ENCODE measurements at regions of chr14 and their contacts with region 1.

Region 1: DNA sequence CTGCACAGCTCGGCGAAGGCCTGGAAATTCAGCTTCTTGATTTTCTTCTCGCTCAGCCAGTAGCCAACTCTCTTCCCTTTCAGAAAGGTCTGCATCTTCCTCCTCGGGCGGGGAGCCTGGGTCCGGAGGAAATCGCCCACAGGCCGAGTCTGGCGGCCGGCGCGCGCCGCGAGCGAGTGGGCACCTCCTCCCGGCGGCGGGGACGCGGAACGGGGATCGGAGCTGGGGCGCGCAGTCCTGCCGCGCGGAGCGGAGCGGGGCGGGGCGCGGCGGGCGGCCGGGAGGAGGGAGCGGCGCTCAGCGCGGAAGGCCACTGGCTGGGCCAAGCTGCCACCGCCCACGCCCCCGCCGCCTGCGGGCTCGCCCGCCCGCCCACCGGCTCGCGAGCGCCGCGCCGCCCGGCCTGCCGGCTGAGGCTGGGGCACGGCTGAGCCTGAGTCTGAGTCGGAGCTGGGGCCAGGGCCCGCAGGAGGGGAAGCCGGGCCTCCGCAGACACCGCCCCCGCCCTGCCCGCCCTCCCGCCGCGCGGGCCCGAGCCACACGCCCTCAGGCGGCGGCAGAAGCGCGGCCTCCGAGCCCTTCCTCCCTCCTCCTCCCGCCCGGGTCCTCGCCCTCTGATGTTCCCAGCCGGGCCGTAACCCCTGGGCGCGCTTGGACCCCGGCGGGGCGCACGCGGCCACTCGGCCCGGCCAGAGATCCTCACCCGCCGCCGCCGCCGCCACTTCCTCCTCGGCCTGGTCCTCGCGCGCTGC is 480 bp downstream of the ITPK1 start:
- DNase-seq: peak; percentile 70 to 80
- ATAC-seq: peak; percentile 84 to 86
- H3K4me3 ChIP-seq: peak overlapping the region; percentile 76
- H3K27ac ChIP-seq: peak overlapping the region; percentile 96 to 100
- H3K4me1 ChIP-seq: peaks cover 20% of the 10 kb centered on the region
- CTCF ChIP-seq: no peak
- EP300 ChIP-seq: no peak
- POLR2A ChIP-seq: peak; percentile 40; the same call in 1 of the 2 replicates
- RAD21 ChIP-seq: 0 out of 5 replicates have a peak, but pooled peaks of 1 of the 2 experiments have one; percentile 11

Region 2: GRCh38 chr14:92951912-92952471 is 163.3 kb before region 1 on chr14:
- CTCF ChIA-PET with region 1: interaction called, 76 read pairs
- POLR2A ChIA-PET with region 1: interaction called, 4 read pairs
- DNase-seq: peak; percentile 70 to 84
- ATAC-seq: peak; percentile 93 to 97
- H3K4me3 ChIP-seq: no peak overlapping the region
- H3K27ac ChIP-seq: peak overlapping the region; percentile 61 to 64; a peak in 5 of 6 replicates
- H3K4me1 ChIP-seq: peaks cover 10% of the 10 kb centered on the region
- CTCF ChIP-seq: peak; percentile 95
- EP300 ChIP-seq: no peak
- POLR2A ChIP-seq: no peak
- RAD21 ChIP-seq: peak; percentile 98

Region 3: DNA sequence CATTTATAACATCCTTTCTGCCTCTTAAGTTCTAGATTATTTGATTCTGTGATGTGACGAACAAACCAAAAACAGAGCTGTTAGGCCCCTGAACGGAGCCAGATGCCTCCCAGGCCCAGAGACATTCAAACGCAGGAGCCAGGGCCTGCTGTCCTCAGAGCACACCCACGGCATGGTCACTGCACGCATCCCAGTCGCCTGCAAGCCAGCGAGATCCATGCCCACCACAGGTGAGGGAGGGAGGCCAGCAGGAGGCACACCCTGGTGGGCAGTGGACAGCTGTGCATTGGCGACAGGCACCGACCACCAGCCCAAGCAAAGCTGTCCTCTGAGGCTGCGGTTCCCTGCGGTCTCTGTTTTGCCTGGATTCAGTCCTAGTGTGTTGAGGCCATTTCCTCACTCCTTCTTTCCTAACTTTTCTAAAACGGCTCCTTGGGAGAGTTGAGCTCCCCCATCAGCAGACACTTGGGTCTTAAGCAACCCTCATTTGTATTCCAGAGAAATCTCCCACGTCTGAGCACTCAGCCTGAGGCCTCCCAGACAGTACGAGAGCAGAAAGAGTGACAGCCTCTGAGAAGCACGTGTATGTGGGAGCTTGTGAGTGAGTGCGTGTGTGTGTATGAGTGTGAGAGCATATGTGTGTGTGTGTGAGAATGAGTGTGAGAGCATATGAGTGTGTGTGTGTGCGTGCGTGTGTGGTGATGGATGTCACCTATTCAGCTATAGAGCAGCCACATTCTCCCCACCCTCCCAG is 111.1 kb before region 1 on chr14:
- CTCF ChIA-PET with region 1: interaction called, 10 read pairs
- POLR2A ChIA-PET with region 1: no interaction called
- DNase-seq: no peak
- ATAC-seq: no peak
- H3K4me3 ChIP-seq: no peak overlapping the region
- H3K27ac ChIP-seq: no peak overlapping the region
- H3K4me1 ChIP-seq: peaks cover 30% of the 10 kb centered on the region
- CTCF ChIP-seq: no peak
- EP300 ChIP-seq: no peak
- POLR2A ChIP-seq: no peak
- RAD21 ChIP-seq: no peak

Region 4: GRCh38 chr14:93132470-93133065 is 17.3 kb after region 1 on chr14:
- CTCF ChIA-PET with region 1: interaction called, 371 read pairs
- POLR2A ChIA-PET with region 1: interaction called, 7 read pairs
- DNase-seq: peak; percentile 57 to 59
- ATAC-seq: peak; percentile 83 to 91; a peak in 5 of 6 replicates
- H3K4me3 ChIP-seq: no peak overlapping the region
- H3K27ac ChIP-seq: no peak overlapping the region
- H3K4me1 ChIP-seq: peaks cover 22% of the 10 kb centered on the region
- CTCF ChIP-seq: peak; percentile 38
- EP300 ChIP-seq: no peak
- POLR2A ChIP-seq: no peak
- RAD21 ChIP-seq: peak; percentile 25 to 42; a peak in 2 of 5 replicates

Region 5: GRCh38 chr14:93160353-93160801 is 45.1 kb after region 1 on chr14:
- CTCF ChIA-PET with region 1: interaction called, 16 read pairs
- POLR2A ChIA-PET with region 1: no interaction called
- DNase-seq: peak; percentile 62 to 66
- ATAC-seq: peak; percentile 89 to 91
- H3K4me3 ChIP-seq: no peak overlapping the region
- H3K27ac ChIP-seq: no peak overlapping the region
- H3K4me1 ChIP-seq: 0 out of 3 replicates have a peak, but pooled peaks cover 3% of the 10 kb centered on the region
- CTCF ChIP-seq: peak; percentile 58
- EP300 ChIP-seq: no peak
- POLR2A ChIP-seq: no peak
- RAD21 ChIP-seq: peak; percentile 62 to 67; a peak in 4 of 5 replicates

Region 6: GRCh38 chr14:93219103-93219726 is 104.0 kb after region 1 on chr14:
- CTCF ChIA-PET with region 1: interaction called, 19 read pairs
- POLR2A ChIA-PET with region 1: no interaction called
- DNase-seq: peak; percentile 54 to 80
- ATAC-seq: peak; percentile 94 to 95
- H3K4me3 ChIP-seq: no peak overlapping the region
- H3K27ac ChIP-seq: no peak overlapping the region
- H3K4me1 ChIP-seq: no peaks in the 10 kb centered on the region
- CTCF ChIP-seq: peak; percentile 72
- EP300 ChIP-seq: no peak
- POLR2A ChIP-seq: no peak
- RAD21 ChIP-seq: peak; percentile 68 to 72